ENCODE measurements at regions of chr19 and their contacts with region 1.

Region 1: DNA sequence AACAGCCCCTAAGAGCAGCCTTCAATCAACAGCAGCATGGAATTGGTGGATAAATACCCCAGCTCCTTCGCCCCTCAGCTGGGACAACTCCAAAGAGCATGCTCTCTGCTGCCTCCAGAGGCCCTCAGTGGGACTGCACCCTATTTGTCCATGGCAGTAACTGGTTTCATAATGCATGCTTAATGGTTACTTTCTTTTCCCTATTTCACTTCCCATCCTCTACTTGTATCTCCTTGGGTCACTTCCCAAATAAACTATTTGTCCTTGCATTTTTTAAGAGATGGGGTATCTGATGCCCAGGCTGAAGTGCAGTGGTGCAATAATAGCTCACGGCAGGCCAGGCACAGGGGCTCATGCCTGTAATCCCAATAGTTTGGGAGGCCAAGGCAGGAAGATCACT is 13.5 kb upstream of the TPM4 start:
- DNase-seq: peak; percentile 58 to 84 (median 66)
- ATAC-seq: peak; percentile 91
- H3K4me3 ChIP-seq: no peak overlapping the region
- H3K4me3 Mint-ChIP-seq: no peak overlapping the region
- H3K27ac ChIP-seq: no peak overlapping the region
- H3K27ac Mint-ChIP-seq: no peak overlapping the region
- H3K4me1 ChIP-seq: peaks cover 24% of the 10 kb centered on the region
- H3K4me1 Mint-ChIP-seq: peaks cover 18% of the 10 kb centered on the region
- H3K27me3 ChIP-seq: no peaks in the 10 kb centered on the region
- H3K27me3 Mint-ChIP-seq: no peaks in the 10 kb centered on the region
- CTCF ChIP-seq: peak; percentile 90

Region 2: GRCh38 chr19:16088351-16089009 is 25.7 kb after region 1 on chr19:
- CTCF ChIA-PET with region 1: interaction called, 20 read pairs
- POLR2A ChIA-PET with region 1: interaction called, 7 read pairs
- intact Hi-C with region 1: loop called in 1 of 2 experiments (anchors 1 kb)
- DNase-seq: no peak
- ATAC-seq: no peak
- H3K4me3 ChIP-seq: no peak overlapping the region
- H3K4me3 Mint-ChIP-seq: no peak overlapping the region
- H3K27ac ChIP-seq: no peak overlapping the region
- H3K27ac Mint-ChIP-seq: peak overlapping the region; percentile 64
- H3K4me1 ChIP-seq: peaks cover 45% of the 10 kb centered on the region
- H3K4me1 Mint-ChIP-seq: peaks cover 46% of the 10 kb centered on the region
- H3K27me3 ChIP-seq: no peaks in the 10 kb centered on the region
- H3K27me3 Mint-ChIP-seq: no peaks in the 10 kb centered on the region
- CTCF ChIP-seq: no peak

Region 3: DNA sequence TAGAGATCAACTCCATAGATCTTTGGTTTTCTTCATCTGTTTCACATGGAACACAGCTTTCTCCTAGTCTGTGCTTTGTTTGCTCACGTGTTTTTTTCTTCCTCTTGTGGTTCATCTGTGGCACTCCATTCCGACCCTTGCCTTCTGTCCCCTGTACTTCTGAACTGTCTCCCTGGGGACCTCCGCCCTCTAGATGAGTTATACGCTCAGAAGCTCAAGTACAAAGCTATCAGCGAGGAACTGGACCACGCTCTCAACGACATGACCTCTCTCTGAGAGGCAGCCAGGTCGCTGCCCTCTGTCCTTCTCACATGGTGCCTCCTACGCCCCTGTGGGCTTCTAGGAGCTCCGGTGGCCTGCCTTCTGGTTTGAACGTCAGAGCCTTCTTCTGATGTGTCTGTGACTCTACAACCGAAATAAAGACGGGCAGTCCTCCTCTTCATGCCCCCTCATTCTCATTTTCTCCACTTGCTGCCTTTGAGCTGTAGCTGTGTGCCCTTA is 32.3 kb after region 1 on chr19:
- CTCF ChIA-PET with region 1: interaction called, 6 read pairs
- POLR2A ChIA-PET with region 1: interaction called, 3 read pairs
- intact Hi-C with region 1: loop called in 1 of 2 experiments (anchors 5 kb)
- DNase-seq: no peak
- ATAC-seq: peak; percentile 66
- H3K4me3 ChIP-seq: no peak overlapping the region
- H3K4me3 Mint-ChIP-seq: peak overlapping the region; percentile 64
- H3K27ac ChIP-seq: peak overlapping the region in 1 of 2 donors; percentile 41
- H3K27ac Mint-ChIP-seq: peak overlapping the region; percentile 80
- H3K4me1 ChIP-seq: peaks cover 9% of the 10 kb centered on the region
- H3K4me1 Mint-ChIP-seq: peaks cover 32% of the 10 kb centered on the region
- H3K27me3 ChIP-seq: no peaks in the 10 kb centered on the region
- H3K27me3 Mint-ChIP-seq: no peaks in the 10 kb centered on the region
- CTCF ChIP-seq: no peak

Region 4: DNA sequence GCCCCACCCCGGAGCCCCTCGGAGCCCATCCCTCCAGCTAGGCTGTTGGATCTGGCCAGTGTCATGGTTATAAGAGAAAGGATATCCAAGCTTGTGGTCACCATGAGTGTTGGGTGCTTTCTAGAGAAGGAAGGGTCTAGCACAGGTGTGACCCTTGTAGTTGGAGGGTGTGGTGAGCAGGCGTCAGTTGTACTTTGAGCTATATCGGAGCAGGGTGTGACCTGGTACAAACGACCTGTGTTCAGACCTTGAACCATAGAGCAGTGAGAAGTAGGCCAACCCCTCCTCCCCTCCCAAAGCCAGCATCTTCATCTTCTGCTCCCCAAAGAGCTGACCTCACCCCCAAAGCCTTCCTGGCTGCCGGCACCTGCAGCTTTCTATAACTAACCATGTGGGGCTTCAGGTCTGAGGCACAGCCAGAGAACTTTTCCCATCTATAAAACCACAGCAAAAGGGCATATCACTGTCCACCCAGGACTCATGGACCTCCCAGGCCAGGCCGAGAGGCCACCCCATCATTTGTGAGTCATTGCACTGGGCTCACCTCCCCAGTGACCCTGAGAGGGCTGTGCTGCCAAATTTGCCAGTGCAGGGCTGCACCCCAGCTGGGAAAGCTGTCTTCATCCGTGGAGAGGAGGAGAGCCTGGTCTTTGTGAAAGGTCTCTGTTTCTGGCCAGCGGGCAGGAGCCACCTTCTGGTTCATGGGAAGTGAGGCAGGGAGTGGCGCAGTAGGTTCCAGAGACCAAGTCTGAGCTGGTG is 63.1 kb after region 1 on chr19:
- CTCF ChIA-PET with region 1: no interaction called
- POLR2A ChIA-PET with region 1: no interaction called
- intact Hi-C with region 1: no loop called
- DNase-seq: no peak
- ATAC-seq: no peak
- H3K4me3 ChIP-seq: no peak overlapping the region
- H3K4me3 Mint-ChIP-seq: no peak overlapping the region
- H3K27ac ChIP-seq: no peak overlapping the region
- H3K27ac Mint-ChIP-seq: no peak overlapping the region
- H3K4me1 ChIP-seq: peaks cover 3% of the 10 kb centered on the region
- H3K4me1 Mint-ChIP-seq: no peaks in the 10 kb centered on the region
- H3K27me3 ChIP-seq: no peaks in the 10 kb centered on the region
- H3K27me3 Mint-ChIP-seq: no peaks in the 10 kb centered on the region
- CTCF ChIP-seq: no peak